K562 (cell line): ENCODE measurements at regions of chr16 and their contacts with region 1.

Region 1: DNA sequence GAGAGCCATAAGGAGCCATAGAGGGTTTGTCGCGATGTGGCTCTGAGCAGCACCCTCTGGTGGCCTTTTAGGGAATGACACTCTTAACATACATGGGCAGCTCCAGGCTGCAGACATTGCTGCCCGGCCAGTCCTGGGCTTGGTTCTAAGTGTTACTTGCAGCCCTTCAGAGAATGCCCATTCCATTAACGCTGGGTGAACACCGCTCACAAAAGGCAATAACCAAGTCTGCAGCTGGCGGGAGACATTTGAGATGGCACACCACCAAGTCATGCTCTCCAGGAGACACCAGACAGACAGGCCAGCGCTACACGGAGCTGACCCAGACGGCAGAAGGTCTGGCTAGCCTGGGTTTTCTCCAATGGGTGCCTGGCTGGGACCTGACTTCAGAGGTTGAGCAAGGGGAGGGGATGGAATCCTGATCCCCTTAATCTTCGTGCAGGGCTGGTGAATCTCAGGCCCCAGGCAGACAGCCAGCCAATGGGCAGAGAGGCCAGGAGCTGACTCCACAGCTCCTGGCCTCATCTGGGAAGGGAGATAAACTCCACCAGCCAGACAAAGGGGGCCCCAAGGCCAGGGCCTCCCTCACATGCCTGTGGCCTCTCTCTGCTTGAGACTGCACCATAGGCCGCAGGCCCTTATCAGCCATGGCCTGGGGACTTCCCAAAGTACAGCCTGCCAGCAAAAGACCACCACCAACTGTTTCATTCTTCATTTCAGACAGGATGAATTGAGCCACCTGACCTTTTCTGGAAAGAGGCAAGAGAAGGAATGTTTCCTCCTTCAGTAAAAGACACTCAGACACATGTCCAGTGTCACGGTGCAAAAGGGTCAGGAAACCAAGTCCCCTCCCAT is 58.8 kb downstream of the ZDHHC7 start:
- DNase-seq: peak; percentile 90 to 99 (median 94)
- ATAC-seq: peak; percentile 95
- H3K4me3 ChIP-seq: no peak overlapping the region
- H3K27ac ChIP-seq: peak overlapping the region; percentile 67
- H3K4me1 ChIP-seq: peaks cover 21 to 56% of the 10 kb centered on the region in 2 experiments
- H3K27me3 ChIP-seq: no peaks in the 10 kb centered on the region
- CTCF ChIP-seq: peak; percentile 91 to 98 (median 93)
- EP300 ChIP-seq: peak; percentile 94
- POLR2A ChIP-seq: no peak
- RAD21 ChIP-seq: peak; percentile 83 to 88

Region 2: GRCh38 chr16:84881702-84882521 is 70.7 kb before region 1 on chr16:
- CTCF ChIA-PET with region 1: no interaction called
- POLR2A ChIA-PET with region 1: no interaction called
- in situ Hi-C with region 1: no loop called
- intact Hi-C with region 1: loop called (anchors 5 kb)
- DNase-seq: peak; percentile 72 to 89 (median 78)
- ATAC-seq: peak; percentile 76
- H3K4me3 ChIP-seq: no peak overlapping the region
- H3K27ac ChIP-seq: peak overlapping the region; percentile 24; the same call in 1 of the 3 replicates
- H3K4me1 ChIP-seq: peaks cover 52 to 61% of the 10 kb centered on the region in 2 experiments
- H3K27me3 ChIP-seq: no peaks in the 10 kb centered on the region
- CTCF ChIP-seq: no peak
- EP300 ChIP-seq: peak; percentile 64; the same call in 1 of the 2 replicates
- POLR2A ChIP-seq: no peak
- RAD21 ChIP-seq: no peak

Region 3: DNA sequence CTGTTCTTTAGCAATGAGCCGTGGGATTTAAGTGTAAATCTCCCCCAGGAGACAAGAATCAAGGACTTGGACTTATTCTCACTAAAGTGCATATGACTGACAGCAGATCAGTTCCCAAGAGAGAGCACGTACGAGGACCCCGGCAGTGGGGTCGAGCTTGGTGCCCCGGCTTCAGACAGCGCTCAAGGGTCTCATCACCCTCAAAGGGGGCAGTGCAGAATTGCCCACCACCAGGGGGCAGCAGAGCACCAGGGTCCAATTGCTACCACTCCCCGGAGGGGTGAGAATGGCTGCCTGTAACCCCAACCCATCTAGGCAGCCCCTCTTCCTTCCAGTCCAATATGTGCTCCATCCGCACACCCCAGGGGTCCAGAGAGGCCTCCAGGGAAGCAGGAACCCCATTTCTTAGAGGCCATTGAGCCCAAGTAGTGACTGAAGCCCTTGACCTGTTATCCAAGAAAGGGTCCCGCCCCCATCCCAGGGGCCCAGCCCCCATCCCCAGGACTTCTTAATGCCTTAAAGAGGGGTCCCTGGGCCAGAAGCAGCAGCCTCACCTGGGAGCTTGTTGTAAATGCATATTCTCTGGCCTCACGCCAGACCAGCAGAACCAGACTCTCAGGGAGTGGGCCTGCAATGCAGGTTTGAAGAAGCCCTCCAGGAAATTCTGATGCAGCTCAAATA is 27.3 kb before region 1 on chr16:
- CTCF ChIA-PET with region 1: interaction called, 34 read pairs
- POLR2A ChIA-PET with region 1: interaction called, 6 read pairs
- in situ Hi-C with region 1: no loop called
- intact Hi-C with region 1: loop called (anchors 1 kb)
- DNase-seq: peak; percentile 85 to 88 (median 86)
- ATAC-seq: peak; percentile 90
- H3K4me3 ChIP-seq: no peak overlapping the region
- H3K27ac ChIP-seq: no peak overlapping the region
- H3K4me1 ChIP-seq: peaks cover 10 to 54% of the 10 kb centered on the region in 2 experiments
- H3K27me3 ChIP-seq: peaks cover 3 to 10% of the 10 kb centered on the region in 2 experiments; a peak in 2 of 5 replicates
- CTCF ChIP-seq: peak; percentile 95 to 99 (median 97)
- EP300 ChIP-seq: no peak
- POLR2A ChIP-seq: no peak
- RAD21 ChIP-seq: peak; percentile 98 to 99